ENCODE measurements at regions of chr6 and their contacts with region 1.

Region 1: DNA sequence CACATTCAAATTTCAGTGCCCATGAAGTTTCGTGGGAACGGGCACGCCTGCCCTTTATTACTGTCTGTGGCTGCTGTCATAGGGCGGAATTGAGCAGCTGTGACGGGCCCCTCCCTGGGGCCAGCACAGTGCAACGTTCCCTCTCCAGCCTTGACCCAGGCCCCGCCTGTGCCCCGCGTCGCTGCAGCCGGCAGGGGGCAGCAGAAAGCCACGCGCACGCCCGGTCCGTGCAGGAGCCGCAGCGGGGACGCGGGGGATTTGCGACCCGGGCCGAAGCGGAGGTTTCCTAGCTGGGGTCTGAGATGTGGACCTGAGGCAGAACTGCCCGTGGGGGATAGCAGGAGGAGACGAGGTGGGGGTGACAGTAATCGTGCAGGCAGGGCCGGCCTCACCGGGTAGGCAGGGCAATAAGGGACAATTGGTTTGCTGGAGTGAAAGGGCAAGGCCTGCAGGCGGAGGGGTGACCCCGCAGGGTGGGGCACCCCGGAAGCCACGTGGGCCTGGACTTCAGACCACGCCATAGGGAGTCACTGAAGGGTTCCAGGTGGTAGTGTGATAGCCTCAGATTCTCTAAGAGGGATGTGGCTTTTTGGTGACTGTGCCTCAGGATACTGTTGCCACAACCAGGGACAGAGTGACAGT is 54.4 kb downstream of the SYTL3 start:
- DNase-seq: peak; percentile 95

Region 2: GRCh38 chr6:158803733-158804143 is 99.4 kb after region 1 on chr6:
- intact Hi-C with region 1: no loop called
- DNase-seq: no peak

Region 3: DNA sequence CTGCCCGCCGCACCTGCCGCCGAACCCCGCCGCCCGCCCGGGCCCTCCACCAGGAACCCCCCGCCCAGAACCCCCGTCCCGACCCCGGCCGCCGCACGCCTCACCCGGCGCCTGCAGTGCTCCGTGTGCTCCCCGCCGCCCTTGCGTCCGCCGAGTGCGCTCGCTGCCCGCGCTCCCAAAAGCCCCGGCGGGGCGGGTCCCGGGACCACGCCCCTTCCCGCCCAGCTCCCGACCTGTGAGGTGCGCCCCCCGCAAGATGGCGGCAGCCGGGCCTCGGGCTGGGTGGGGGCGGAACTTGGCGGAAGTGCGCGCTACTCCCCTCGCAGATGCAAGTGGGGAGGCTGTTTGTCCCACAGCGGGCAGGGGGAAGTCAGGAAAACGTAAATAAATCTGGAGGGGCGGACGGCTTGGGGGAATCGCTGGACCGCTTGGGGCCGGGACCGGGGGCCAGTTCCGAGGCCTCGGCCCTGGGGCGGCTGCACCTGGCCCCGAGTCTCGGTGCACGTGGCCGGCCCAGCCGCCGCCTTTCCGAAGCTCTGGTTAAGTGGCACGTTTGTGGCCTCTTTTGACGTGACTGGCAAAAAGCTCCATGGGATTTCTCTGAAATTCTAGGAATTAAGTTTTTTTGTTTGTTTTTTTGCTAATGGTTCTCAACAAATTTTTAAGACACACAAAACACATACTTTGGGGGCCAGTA is 115.1 kb after region 1 on chr6 and contains the start of gene EZR:
- intact Hi-C with region 1: loop called in 1 of 2 experiments (anchors 10 kb)
- DNase-seq: peak; percentile 88
- total RNA-seq, gene EZR: 65.1 to 71.7 TPM

Region 4: DNA sequence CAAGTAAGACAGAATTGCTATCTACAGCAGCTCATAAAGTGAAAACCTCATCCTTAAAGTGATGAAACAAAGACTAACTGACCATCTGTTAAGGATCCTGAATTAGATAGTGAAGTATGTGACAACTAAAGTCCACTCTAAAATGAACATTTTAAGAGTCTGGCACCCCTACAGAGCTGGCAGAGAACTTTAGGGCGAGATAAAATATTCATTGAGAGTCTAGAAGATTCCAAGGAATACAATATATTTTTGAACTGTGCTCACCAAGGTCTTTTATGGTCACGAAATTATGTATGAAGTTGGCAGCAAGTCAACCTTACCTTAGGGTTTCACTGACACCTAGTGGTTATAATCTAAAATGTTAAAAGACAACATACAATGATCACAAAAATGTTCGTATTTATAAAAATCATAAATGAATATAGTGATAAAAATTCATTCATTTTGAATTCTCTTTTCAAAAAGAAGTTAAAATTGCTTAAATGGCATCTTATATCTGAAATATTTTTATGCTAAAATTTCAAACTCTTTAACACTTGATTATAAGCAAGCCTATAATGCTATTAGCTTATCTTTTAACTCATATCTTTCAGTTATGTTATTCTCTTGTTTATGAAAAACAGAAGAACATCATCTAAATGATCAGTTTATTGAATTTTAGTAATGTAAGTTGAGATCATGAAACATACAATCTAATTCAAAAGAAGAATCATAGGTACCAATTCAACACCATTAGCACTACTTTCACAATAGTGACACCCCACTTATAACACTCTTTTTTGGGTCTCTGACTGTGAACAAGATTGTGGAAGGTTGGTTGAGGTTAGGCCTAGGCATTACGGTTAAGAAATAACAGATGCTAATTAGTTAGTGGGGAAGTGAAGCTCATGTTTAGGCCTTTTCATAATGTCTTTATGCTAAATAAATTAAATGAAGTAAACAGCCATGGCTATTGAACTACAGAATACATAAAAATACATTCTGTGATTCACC is 268.2 kb after region 1 on chr6:
- intact Hi-C with region 1: loop called in 1 of 2 experiments (anchors 5 kb)
- DNase-seq: no peak

Region 5: GRCh38 chr6:158978757-158979156 is 274.5 kb after region 1 on chr6:
- intact Hi-C with region 1: loop called (anchors 2 to 5 kb)
- DNase-seq: no peak

Region 6: GRCh38 chr6:159529934-159530333 is 825.6 kb after region 1 on chr6:
- intact Hi-C with region 1: no loop called
- DNase-seq: no peak